Activated CD4-positive, alpha-beta T cell treated with anti-CD3 and anti-CD28 coated beads for 36 hours (primary cell): ENCODE measurements at regions of chr13 and their contacts with region 1.

Region 1: GRCh38 chr13:20940083-20940880 is 37.7 kb upstream of the XPO4 start:
- DNase-seq: no peak
- ATAC-seq: no peak
- H3K4me3 Mint-ChIP-seq: no peak overlapping the region
- H3K27ac Mint-ChIP-seq: no peak overlapping the region
- H3K4me1 Mint-ChIP-seq: no peaks in the 10 kb centered on the region
- H3K27me3 Mint-ChIP-seq: peaks cover 17% of the 10 kb centered on the region

Region 2: DNA sequence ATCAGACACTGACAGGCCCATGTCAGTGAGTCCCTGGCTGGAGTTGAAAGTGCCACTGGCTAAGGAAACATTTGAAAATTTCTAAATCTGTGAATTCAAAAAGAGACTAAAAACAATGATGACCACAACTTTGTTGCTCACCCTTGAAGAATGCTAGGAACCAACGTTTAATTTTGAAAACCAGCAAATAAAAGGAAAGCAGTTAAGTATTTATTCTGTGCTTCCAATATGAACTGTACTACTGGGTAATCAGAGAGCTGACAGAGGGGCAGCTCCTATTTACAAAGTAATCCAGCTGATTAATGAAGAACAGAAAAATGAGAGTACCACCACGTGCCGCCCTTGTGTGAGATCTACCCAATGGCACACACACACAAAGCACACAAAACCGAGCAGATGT is 165.8 kb after region 1 on chr13:
- CTCF ChIA-PET with region 1: no interaction called
- POLR2A ChIA-PET with region 1: no interaction called
- intact Hi-C with region 1: loop called in 1 of 2 experiments (anchors 1 kb)
- DNase-seq: no peak
- ATAC-seq: no peak
- H3K4me3 Mint-ChIP-seq: no peak overlapping the region
- H3K27ac Mint-ChIP-seq: no peak overlapping the region
- H3K4me1 Mint-ChIP-seq: peaks cover 3% of the 10 kb centered on the region
- H3K27me3 Mint-ChIP-seq: no peaks in the 10 kb centered on the region

Region 3: DNA sequence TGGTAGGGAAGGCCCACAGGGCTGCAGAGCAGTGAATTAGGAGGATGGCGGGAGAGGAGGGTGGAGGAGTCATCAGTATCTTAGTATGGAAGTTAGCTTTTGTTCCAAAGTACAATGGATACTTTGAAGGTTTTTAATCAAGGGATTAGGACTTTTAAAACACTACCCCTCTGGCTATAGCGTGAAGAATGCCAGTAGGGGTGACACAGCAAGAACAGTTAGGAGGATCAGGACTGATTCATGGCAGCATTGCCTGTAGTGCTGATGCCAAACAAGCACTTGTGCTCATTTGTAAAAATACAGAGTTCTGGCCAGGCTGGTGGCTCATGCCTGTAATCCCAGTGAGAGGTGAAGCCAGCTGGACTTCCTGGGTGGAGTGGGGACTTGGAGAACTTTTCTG is 189.8 kb after region 1 on chr13:
- CTCF ChIA-PET with region 1: no interaction called
- POLR2A ChIA-PET with region 1: no interaction called
- intact Hi-C with region 1: loop called in 1 of 2 experiments (anchors 5 kb)
- DNase-seq: no peak
- ATAC-seq: no peak
- H3K4me3 Mint-ChIP-seq: no peak overlapping the region
- H3K27ac Mint-ChIP-seq: no peak overlapping the region
- H3K4me1 Mint-ChIP-seq: no peaks in the 10 kb centered on the region
- H3K27me3 Mint-ChIP-seq: peaks cover 5% of the 10 kb centered on the region

Region 4: GRCh38 chr13:21476893-21477472 is 536.7 kb after region 1 on chr13:
- CTCF ChIA-PET with region 1: interaction called, 3 read pairs
- POLR2A ChIA-PET with region 1: no interaction called
- intact Hi-C with region 1: loop called (anchors 1 to 2 kb)
- DNase-seq: peak; percentile 91
- ATAC-seq: peak; percentile 96
- H3K4me3 Mint-ChIP-seq: peak overlapping the region; percentile 78
- H3K27ac Mint-ChIP-seq: peak overlapping the region; percentile 52
- H3K4me1 Mint-ChIP-seq: peaks cover 8% of the 10 kb centered on the region
- H3K27me3 Mint-ChIP-seq: no peaks in the 10 kb centered on the region